ENCODE measurements at regions of chr14 and their contacts with region 1.

Region 1: DNA sequence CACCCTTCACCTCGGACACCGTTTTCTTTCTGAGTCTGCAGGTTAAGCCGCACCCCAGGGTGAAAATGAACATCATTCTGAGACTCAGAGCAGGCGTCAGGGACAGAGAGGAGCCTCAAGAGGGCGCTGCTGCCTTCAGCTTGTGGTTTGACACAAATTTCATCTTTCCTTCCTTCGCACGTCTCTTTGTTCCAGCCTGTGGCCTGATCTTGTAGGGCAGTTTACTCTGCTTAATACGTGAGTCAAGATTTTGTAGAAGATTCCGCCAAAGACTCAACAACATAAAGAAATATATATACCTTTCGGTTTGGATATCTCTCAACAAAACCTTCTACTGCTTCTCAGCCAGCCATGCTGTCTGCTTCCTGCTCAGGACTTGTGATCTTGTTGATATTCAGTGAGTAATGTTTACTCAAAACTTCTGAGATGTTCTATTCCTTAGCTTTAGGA is 329.3 kb upstream of the OR4E1 start:
- DNase-seq: peak; percentile 39 to 84 (median 70)
- ATAC-seq: peak; percentile 76
- H3K4me3 ChIP-seq: peak overlapping the region; percentile 17 to 28
- H3K4me3 Mint-ChIP-seq: peak overlapping the region; percentile 67
- H3K27ac ChIP-seq: peak overlapping the region; percentile 50 to 67
- H3K27ac Mint-ChIP-seq: peak overlapping the region; percentile 93
- H3K4me1 ChIP-seq: peaks cover 20% of the 10 kb centered on the region
- H3K4me1 Mint-ChIP-seq: peaks cover 28% of the 10 kb centered on the region
- H3K27me3 ChIP-seq: no peaks in the 10 kb centered on the region
- H3K27me3 Mint-ChIP-seq: no peaks in the 10 kb centered on the region
- CTCF ChIP-seq: peak; percentile 32

Region 2: GRCh38 chr14:21680072-21680471 is 322.8 kb before region 1 on chr14:
- CTCF ChIA-PET with region 1: no interaction called
- POLR2A ChIA-PET with region 1: no interaction called
- intact Hi-C with region 1: no loop called
- DNase-seq: no peak
- ATAC-seq: no peak
- H3K4me3 ChIP-seq: no peak overlapping the region
- H3K4me3 Mint-ChIP-seq: no peak overlapping the region
- H3K27ac ChIP-seq: no peak overlapping the region
- H3K27ac Mint-ChIP-seq: no peak overlapping the region
- H3K4me1 ChIP-seq: no peaks in the 10 kb centered on the region
- H3K4me1 Mint-ChIP-seq: no peaks in the 10 kb centered on the region
- H3K27me3 ChIP-seq: no peaks in the 10 kb centered on the region
- H3K27me3 Mint-ChIP-seq: peaks cover 13% of the 10 kb centered on the region
- CTCF ChIP-seq: no peak

Region 3: DNA sequence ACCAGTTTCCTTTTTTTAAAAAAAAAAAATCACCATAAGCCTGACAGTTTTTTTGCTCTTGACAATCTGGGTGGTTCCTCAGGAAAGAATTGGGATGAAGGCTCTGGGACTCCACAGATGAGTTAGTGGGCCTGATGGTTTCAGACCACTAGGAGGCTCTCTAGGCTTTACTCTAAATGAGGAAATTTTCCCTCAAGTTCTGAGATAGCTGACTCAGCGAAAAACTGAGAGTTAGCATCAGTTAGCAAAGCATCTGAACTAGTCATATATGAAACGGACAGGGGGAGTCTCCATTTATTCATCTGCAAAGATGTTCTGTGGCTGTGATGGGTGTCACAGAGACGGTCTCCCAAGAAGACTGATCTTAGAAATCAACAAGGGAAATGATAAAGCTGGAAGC is 14.9 kb before region 1 on chr14:
- CTCF ChIA-PET with region 1: interaction called, 25 read pairs
- POLR2A ChIA-PET with region 1: no interaction called
- intact Hi-C with region 1: no loop called
- DNase-seq: peak in 2 of 9 experiments; percentile 43 to 61
- ATAC-seq: no peak
- H3K4me3 ChIP-seq: no peak overlapping the region
- H3K4me3 Mint-ChIP-seq: no peak overlapping the region
- H3K27ac ChIP-seq: no peak overlapping the region
- H3K27ac Mint-ChIP-seq: peak overlapping the region; percentile 37
- H3K4me1 ChIP-seq: peaks cover 6% of the 10 kb centered on the region
- H3K4me1 Mint-ChIP-seq: peaks cover 14% of the 10 kb centered on the region
- H3K27me3 ChIP-seq: no peaks in the 10 kb centered on the region
- H3K27me3 Mint-ChIP-seq: no peaks in the 10 kb centered on the region
- CTCF ChIP-seq: peak; percentile 41

Region 4: GRCh38 chr14:22039938-22040775 is 37.3 kb after region 1 on chr14:
- CTCF ChIA-PET with region 1: interaction called, 12 read pairs
- POLR2A ChIA-PET with region 1: no interaction called
- intact Hi-C with region 1: loop called (anchors 2 to 5 kb)
- DNase-seq: peak in 8 of 9 experiments; percentile 1 to 72 (median 52)
- ATAC-seq: peak; percentile 95
- H3K4me3 ChIP-seq: peak overlapping the region; percentile 9 to 35
- H3K4me3 Mint-ChIP-seq: peak overlapping the region; percentile 79
- H3K27ac ChIP-seq: no peak overlapping the region
- H3K27ac Mint-ChIP-seq: peak overlapping the region; percentile 87
- H3K4me1 ChIP-seq: peaks cover 4% of the 10 kb centered on the region
- H3K4me1 Mint-ChIP-seq: peaks cover 16% of the 10 kb centered on the region
- H3K27me3 ChIP-seq: no peaks in the 10 kb centered on the region
- H3K27me3 Mint-ChIP-seq: no peaks in the 10 kb centered on the region
- CTCF ChIP-seq: peak; percentile 72

Region 5: GRCh38 chr14:22122227-22122818 is 119.4 kb after region 1 on chr14:
- CTCF ChIA-PET with region 1: no interaction called
- POLR2A ChIA-PET with region 1: no interaction called
- intact Hi-C with region 1: no loop called
- DNase-seq: peak in 3 of 9 experiments; percentile 24 to 62 (median 43)
- ATAC-seq: peak; percentile 43
- H3K4me3 ChIP-seq: no peak overlapping the region
- H3K4me3 Mint-ChIP-seq: peak overlapping the region; percentile 79
- H3K27ac ChIP-seq: peak overlapping the region in 1 of 2 experiments; percentile 54
- H3K27ac Mint-ChIP-seq: peak overlapping the region; percentile 93
- H3K4me1 ChIP-seq: no peaks in the 10 kb centered on the region
- H3K4me1 Mint-ChIP-seq: peaks cover 19% of the 10 kb centered on the region
- H3K27me3 ChIP-seq: no peaks in the 10 kb centered on the region
- H3K27me3 Mint-ChIP-seq: no peaks in the 10 kb centered on the region
- CTCF ChIP-seq: peak; percentile 14

Region 6: GRCh38 chr14:22268875-22269274 is 266.0 kb after region 1 on chr14:
- CTCF ChIA-PET with region 1: no interaction called
- POLR2A ChIA-PET with region 1: no interaction called
- intact Hi-C with region 1: no loop called
- DNase-seq: peak in 2 of 9 experiments; percentile 7 to 62
- ATAC-seq: peak; percentile 36
- H3K4me3 ChIP-seq: no peak overlapping the region
- H3K4me3 Mint-ChIP-seq: peak overlapping the region; percentile 32
- H3K27ac ChIP-seq: no peak overlapping the region
- H3K27ac Mint-ChIP-seq: peak overlapping the region; percentile 88
- H3K4me1 ChIP-seq: no peaks in the 10 kb centered on the region
- H3K4me1 Mint-ChIP-seq: peaks cover 11% of the 10 kb centered on the region
- H3K27me3 ChIP-seq: no peaks in the 10 kb centered on the region
- H3K27me3 Mint-ChIP-seq: no peaks in the 10 kb centered on the region
- CTCF ChIP-seq: no peak

Measured in CD8-positive, alpha-beta T cell (primary cell).